ENCODE measurements at regions of chr1 and their contacts with region 1.

Region 1: GRCh38 chr1:8477166-8477982 is 159.5 kb downstream of the SLC45A1 start:
- DNase-seq: no peak
- H3K4me3 Mint-ChIP-seq: peak overlapping the region; percentile 1
- H3K27ac Mint-ChIP-seq: peak overlapping the region; percentile 80
- H3K4me1 Mint-ChIP-seq: peaks cover 60% of the 10 kb centered on the region
- H3K27me3 Mint-ChIP-seq: no peaks in the 10 kb centered on the region

Region 2: GRCh38 chr1:8423650-8424538 is 53.5 kb before region 1 on chr1:
- intact Hi-C with region 1: loop called (anchors 1 kb)
- DNase-seq: peak; percentile 32
- H3K4me3 Mint-ChIP-seq: peak overlapping the region; percentile 91
- H3K27ac Mint-ChIP-seq: peak overlapping the region; percentile 92
- H3K4me1 Mint-ChIP-seq: peaks cover 44% of the 10 kb centered on the region
- H3K27me3 Mint-ChIP-seq: no peaks in the 10 kb centered on the region

Region 3: GRCh38 chr1:8497210-8497801 is 19.9 kb after region 1 on chr1:
- intact Hi-C with region 1: loop called (anchors 1 kb)
- DNase-seq: no peak
- H3K4me3 Mint-ChIP-seq: no peak overlapping the region
- H3K27ac Mint-ChIP-seq: peak overlapping the region; percentile 67
- H3K4me1 Mint-ChIP-seq: peaks cover 34% of the 10 kb centered on the region
- H3K27me3 Mint-ChIP-seq: no peaks in the 10 kb centered on the region

Region 4: DNA sequence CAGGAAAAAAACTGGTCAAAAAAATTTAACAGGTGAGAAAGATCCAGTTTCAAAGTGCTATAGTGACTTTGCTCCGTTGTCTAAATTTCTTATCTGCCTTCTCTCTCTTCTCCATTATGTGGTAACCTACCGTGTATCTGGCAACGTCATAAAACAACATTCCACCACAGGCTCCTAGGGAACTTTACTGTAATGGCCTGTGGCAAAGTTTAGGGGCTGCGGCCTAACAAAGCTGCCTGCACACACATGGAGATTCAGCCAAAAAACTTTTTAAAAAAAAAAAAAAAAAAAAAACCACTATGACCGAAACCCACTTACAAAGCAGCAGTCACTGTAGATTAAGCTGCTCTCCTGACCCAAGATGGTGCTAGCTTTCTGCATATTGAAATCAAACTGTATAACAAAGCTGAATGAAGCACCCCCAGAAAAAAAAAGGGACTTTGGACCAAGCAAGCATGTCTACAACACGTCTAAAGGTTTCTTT is 43.2 kb after region 1 on chr1:
- intact Hi-C with region 1: loop called (anchors 1 kb)
- DNase-seq: no peak
- H3K4me3 Mint-ChIP-seq: no peak overlapping the region
- H3K27ac Mint-ChIP-seq: no peak overlapping the region
- H3K4me1 Mint-ChIP-seq: peaks cover 50% of the 10 kb centered on the region
- H3K27me3 Mint-ChIP-seq: no peaks in the 10 kb centered on the region

Region 5: GRCh38 chr1:8554956-8555534 is 77.7 kb after region 1 on chr1:
- intact Hi-C with region 1: loop called (anchors 1 kb)
- DNase-seq: no peak
- H3K4me3 Mint-ChIP-seq: peak overlapping the region; percentile 17
- H3K27ac Mint-ChIP-seq: peak overlapping the region; percentile 84
- H3K4me1 Mint-ChIP-seq: peaks cover 55% of the 10 kb centered on the region
- H3K27me3 Mint-ChIP-seq: no peaks in the 10 kb centered on the region

Region 6: GRCh38 chr1:8604041-8604945 is 126.9 kb after region 1 on chr1:
- intact Hi-C with region 1: loop called (anchors 1 kb)
- DNase-seq: peak; percentile 34
- H3K4me3 Mint-ChIP-seq: peak overlapping the region; percentile 61
- H3K27ac Mint-ChIP-seq: peak overlapping the region; percentile 94
- H3K4me1 Mint-ChIP-seq: peaks cover 48% of the 10 kb centered on the region
- H3K27me3 Mint-ChIP-seq: no peaks in the 10 kb centered on the region